PC-9 (cell line): ENCODE measurements at regions of chr5 and their contacts with region 1.

Region 1: GRCh38 chr5:129767906-129768380 is 20.0 kb downstream of the MINAR2 start:
- DNase-seq: peak; percentile 59 to 75
- H3K4me3 ChIP-seq: no peak overlapping the region
- H3K27ac ChIP-seq: no peak overlapping the region
- H3K4me1 ChIP-seq: no peaks in the 10 kb centered on the region
- H3K27me3 ChIP-seq: no peaks in the 10 kb centered on the region
- CTCF ChIP-seq: peak; percentile 91

Region 2: GRCh38 chr5:129172580-129172979 is 595.4 kb before region 1 on chr5:
- CTCF ChIA-PET with region 1: no interaction called
- POLR2A ChIA-PET with region 1: no interaction called
- intact Hi-C with region 1: loop called (anchors 1 kb)
- DNase-seq: no peak
- H3K4me3 ChIP-seq: no peak overlapping the region
- H3K27ac ChIP-seq: no peak overlapping the region
- H3K4me1 ChIP-seq: no peaks in the 10 kb centered on the region
- H3K27me3 ChIP-seq: no peaks in the 10 kb centered on the region
- CTCF ChIP-seq: peak; percentile 48

Region 3: GRCh38 chr5:129400322-129400983 is 367.5 kb before region 1 on chr5:
- CTCF ChIA-PET with region 1: no interaction called
- POLR2A ChIA-PET with region 1: no interaction called
- intact Hi-C with region 1: loop called (anchors 5 kb)
- DNase-seq: no peak
- H3K4me3 ChIP-seq: no peak overlapping the region
- H3K27ac ChIP-seq: no peak overlapping the region
- H3K4me1 ChIP-seq: no peaks in the 10 kb centered on the region
- H3K27me3 ChIP-seq: no peaks in the 10 kb centered on the region
- CTCF ChIP-seq: peak; percentile 54; the same call in 1 of the 2 replicates

Region 4: GRCh38 chr5:129601576-129601975 is 166.4 kb before region 1 on chr5:
- CTCF ChIA-PET with region 1: no interaction called
- POLR2A ChIA-PET with region 1: no interaction called
- intact Hi-C with region 1: no loop called
- DNase-seq: no peak
- H3K4me3 ChIP-seq: no peak overlapping the region
- H3K27ac ChIP-seq: no peak overlapping the region
- H3K4me1 ChIP-seq: no peaks in the 10 kb centered on the region
- H3K27me3 ChIP-seq: no peaks in the 10 kb centered on the region
- CTCF ChIP-seq: no peak

Region 5: DNA sequence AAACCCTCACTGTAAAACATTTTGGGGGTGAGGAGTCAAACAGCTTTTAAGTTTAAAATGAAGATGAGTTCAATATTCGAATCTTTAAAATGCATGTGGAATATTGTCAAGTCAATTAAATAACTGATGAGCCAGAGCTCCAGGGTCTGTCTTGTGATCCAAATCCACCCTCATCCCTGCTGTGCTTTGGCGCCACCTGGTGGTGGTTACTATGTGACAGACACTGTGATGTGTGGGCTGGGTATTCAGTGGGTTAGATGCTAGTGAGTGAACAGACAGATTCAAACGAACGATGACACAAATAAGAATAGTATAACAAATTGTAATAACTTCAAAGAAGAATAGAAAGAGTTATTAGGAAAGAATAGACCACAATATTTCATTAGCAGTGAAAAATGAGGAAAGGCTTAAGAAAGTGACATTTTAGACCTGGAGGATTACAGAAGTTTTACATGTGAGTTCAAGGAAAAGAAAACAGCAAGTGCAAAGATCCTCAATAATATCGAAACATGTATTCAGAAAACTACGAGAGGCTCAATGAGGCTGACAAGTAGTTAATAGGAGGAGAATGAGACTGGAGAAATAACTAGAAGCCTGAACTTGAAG is 84.9 kb after region 1 on chr5:
- CTCF ChIA-PET with region 1: interaction called, 5 read pairs
- POLR2A ChIA-PET with region 1: no interaction called
- intact Hi-C with region 1: loop called (anchors 1 kb)
- DNase-seq: peak in 1 of 2 experiments; percentile 58
- H3K4me3 ChIP-seq: no peak overlapping the region
- H3K27ac ChIP-seq: no peak overlapping the region
- H3K4me1 ChIP-seq: no peaks in the 10 kb centered on the region
- H3K27me3 ChIP-seq: no peaks in the 10 kb centered on the region
- CTCF ChIP-seq: peak; percentile 95

Region 6: DNA sequence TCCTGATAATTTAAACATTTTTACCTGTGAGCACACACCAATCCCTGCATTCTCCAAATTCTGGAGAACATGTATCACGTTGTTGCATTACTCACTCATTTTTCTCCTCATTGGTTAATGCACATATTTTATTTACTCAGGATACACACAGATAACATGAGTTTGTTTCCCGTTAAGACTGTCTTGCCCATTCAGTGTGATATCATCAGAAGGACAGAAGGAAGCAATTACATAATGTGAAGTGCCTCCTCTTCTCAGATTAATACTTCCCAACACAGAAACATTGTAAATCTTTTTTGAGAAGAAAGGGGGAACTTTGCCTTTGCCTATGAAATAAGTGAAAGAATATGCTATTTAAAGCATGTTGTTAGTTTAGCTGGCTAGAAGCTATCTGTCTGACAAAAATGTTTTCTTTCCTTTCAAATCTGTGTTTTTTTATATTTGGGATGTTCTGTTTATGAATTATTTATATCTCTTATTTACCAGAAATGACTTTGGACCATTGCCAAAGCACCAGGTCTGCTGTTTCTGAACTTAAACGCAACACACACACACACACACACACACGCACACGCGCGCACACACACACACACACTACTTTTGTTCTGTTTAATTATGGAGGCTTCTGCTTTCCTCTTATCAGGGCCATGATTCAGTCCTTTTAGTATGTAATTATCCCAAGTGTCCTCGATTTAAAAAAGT is 322.8 kb after region 1 on chr5:
- CTCF ChIA-PET with region 1: no interaction called
- POLR2A ChIA-PET with region 1: no interaction called
- intact Hi-C with region 1: no loop called
- DNase-seq: no peak
- H3K4me3 ChIP-seq: no peak overlapping the region
- H3K27ac ChIP-seq: no peak overlapping the region
- H3K4me1 ChIP-seq: no peaks in the 10 kb centered on the region
- H3K27me3 ChIP-seq: no peaks in the 10 kb centered on the region
- CTCF ChIP-seq: no peak

Region 7: DNA sequence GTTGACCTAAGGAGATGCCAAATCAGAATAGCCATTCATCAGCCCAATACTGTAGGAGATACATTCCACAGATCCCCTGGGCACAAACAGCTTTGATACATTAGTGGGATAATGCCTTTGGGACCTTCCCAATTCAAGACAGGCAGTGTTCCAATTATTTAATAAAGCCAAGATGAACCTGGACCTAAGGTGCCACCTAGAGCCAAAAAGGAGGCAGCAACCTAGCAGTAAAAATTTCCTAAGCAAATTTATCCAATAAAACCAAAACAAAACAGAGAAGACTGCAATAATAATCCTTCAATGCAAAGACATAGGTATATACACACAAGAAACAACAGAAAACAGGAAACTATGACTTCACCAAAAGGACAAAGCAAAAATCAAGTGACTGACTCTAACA is 1144.1 kb after region 1 on chr5:
- CTCF ChIA-PET with region 1: no interaction called
- POLR2A ChIA-PET with region 1: no interaction called
- intact Hi-C with region 1: loop called (anchors 5 kb)
- DNase-seq: no peak
- H3K4me3 ChIP-seq: no peak overlapping the region
- H3K27ac ChIP-seq: no peak overlapping the region
- H3K4me1 ChIP-seq: no peaks in the 10 kb centered on the region
- H3K27me3 ChIP-seq: no peaks in the 10 kb centered on the region
- CTCF ChIP-seq: peak; percentile 56